PC-3 (cell line): ENCODE measurements at regions of chr2 and their contacts with region 1.

Region 1: DNA sequence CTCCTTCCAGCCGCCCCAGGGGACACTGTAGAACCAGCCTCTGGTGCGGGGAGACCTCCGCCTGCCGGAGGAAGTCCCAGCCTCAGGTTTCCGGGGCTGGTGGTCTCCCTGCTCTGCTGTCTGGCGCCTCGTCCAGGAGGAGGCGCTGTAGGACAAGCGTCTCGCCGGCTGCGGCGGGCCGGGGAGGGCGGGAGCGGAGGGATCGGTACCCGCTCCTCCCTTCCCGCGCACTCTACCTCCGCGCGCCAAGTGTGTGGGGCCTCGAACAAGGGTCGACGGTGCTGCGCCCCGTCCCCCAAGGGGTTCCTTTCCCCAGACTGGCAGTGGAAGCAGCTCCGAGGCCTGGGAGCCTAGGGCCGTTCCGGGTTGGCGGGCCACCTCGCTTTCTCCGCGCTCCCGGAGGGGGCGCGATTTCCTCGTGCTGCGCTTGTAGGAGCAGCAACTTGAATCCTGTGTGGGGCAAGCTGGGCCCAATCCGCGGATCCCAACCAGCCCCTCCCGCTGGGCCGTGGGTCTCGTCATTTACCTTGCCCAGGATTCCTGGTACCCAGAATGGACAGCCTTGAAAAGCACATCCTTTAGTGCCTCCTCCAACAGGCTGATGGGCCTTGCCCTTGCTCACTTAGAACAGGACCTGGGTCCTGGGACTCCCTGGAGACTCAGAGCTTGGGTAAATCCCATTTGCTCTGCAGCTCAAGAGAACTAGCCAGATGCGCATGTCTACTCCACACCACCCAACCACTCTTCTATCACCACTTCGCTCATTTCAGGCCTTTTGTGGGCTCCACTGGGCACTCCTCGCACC is 10.6 kb upstream of the HOXD4 start:
- DNase-seq: peak; percentile 85
- ATAC-seq: peak; percentile 68
- H3K4me3 ChIP-seq: peak overlapping the region; percentile 75
- H3K27ac ChIP-seq: no peak overlapping the region
- H3K4me1 ChIP-seq: peaks cover 9% of the 10 kb centered on the region
- H3K27me3 ChIP-seq: no peaks in the 10 kb centered on the region
- CTCF ChIP-seq: peak; percentile 94

Region 2: DNA sequence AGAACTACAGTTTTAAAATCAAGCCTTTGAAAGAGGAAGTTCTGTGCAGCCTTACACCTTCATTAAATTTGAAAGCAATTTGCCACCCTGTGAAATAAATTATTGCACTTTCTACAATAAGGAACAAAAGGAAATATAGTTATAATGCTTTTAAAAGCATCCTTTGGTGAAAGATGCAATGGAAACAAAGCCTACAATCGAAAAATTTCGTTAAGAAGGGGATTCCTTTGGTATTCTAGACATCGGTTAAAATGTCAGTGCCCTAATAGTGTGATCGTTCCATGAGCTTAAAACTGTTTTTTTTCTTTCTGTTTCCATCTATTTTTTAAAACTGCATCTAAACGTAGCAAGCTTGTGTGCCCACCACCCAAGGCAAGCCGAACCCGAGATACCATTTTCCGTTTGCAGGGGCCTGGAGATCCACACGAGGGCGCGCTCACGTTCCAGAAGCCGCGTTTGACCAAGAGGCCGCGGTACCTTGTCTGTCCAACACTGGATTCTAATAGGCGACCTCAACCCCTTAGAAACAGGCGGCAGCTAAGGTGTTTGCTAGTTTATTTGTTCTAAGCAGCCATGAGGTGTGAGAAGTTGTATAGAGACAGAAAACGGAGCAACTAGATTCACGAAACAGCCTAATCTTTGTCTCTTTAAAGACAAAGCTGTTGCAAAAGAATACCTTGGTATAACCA is 29.6 kb before region 1 on chr2:
- CTCF ChIA-PET with region 1: no interaction called
- POLR2A ChIA-PET with region 1: no interaction called
- intact Hi-C with region 1: no loop called
- DNase-seq: peak; percentile 65
- ATAC-seq: peak; percentile 72
- H3K4me3 ChIP-seq: no peak overlapping the region
- H3K27ac ChIP-seq: no peak overlapping the region
- H3K4me1 ChIP-seq: peaks cover 4% of the 10 kb centered on the region; the same call in 1 of the 2 replicates
- H3K27me3 ChIP-seq: peaks cover 38% of the 10 kb centered on the region
- CTCF ChIP-seq: peak; percentile 91

Region 3: GRCh38 chr2:176325732-176326131 is 185.0 kb after region 1 on chr2:
- CTCF ChIA-PET with region 1: no interaction called
- POLR2A ChIA-PET with region 1: no interaction called
- intact Hi-C with region 1: loop called (anchors 5 kb)
- DNase-seq: no peak
- ATAC-seq: no peak
- H3K4me3 ChIP-seq: no peak overlapping the region
- H3K27ac ChIP-seq: no peak overlapping the region
- H3K4me1 ChIP-seq: no peaks in the 10 kb centered on the region
- H3K27me3 ChIP-seq: no peaks in the 10 kb centered on the region
- CTCF ChIP-seq: no peak

Region 4: DNA sequence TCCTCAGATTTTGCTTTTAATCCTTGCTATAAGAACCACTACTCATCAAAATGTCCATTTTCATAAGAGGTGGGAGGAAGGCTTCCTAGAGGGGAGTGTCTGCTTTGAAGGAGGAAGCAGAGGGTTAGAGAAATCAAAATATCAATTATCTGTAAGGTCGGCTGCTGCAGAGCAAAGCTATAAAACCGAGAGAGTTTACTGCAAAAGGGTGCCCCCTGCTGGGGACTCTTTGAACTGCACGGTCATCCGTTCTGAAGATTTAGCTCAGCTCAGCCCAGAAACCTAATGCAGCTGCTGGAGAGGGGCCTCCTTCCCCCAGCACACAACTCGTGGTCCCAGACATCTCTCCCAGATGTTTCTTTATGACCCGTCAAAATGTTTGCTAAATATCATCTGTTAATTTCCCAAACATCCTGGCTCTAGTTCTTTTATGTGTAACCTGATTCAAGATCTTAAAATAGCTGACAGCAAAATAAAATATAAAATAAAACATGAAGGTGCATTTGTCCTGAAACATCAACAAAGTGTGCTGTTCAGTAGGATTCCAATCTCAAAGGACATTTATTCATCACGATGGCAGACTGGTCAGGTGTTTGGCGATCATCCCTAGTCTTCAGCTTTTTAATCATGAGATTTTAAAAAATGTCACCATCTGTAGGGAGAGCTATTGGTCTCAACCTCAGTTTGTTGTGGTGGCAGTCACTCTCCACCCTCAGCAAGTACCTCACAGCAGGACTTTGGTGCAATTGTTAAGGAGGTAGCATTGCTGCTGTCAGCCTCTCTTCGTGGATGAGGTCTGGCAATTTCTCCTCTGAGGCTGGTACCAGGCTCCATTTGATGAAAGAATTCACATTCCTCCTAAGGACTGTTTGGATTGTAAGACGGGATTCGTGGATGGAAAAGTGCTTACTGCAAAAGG is 314.4 kb after region 1 on chr2:
- CTCF ChIA-PET with region 1: interaction called, 52 read pairs
- POLR2A ChIA-PET with region 1: no interaction called
- intact Hi-C with region 1: loop called (anchors 1 kb)
- DNase-seq: peak; percentile 92
- ATAC-seq: peak; percentile 78
- H3K4me3 ChIP-seq: no peak overlapping the region
- H3K27ac ChIP-seq: no peak overlapping the region
- H3K4me1 ChIP-seq: no peaks in the 10 kb centered on the region
- H3K27me3 ChIP-seq: no peaks in the 10 kb centered on the region
- CTCF ChIP-seq: peak; percentile 92

Region 5: GRCh38 chr2:176653479-176654443 is 513.0 kb after region 1 on chr2:
- CTCF ChIA-PET with region 1: interaction called, 8 read pairs
- POLR2A ChIA-PET with region 1: no interaction called
- intact Hi-C with region 1: loop called (anchors 1 kb)
- DNase-seq: peak; percentile 89
- ATAC-seq: peak; percentile 89
- H3K4me3 ChIP-seq: no peak overlapping the region
- H3K27ac ChIP-seq: no peak overlapping the region
- H3K4me1 ChIP-seq: no peaks in the 10 kb centered on the region
- H3K27me3 ChIP-seq: no peaks in the 10 kb centered on the region
- CTCF ChIP-seq: peak; percentile 85